CD4-positive, alpha-beta memory T cell (primary cell): ENCODE measurements at regions of chr12 and their contacts with region 1.

Region 1: DNA sequence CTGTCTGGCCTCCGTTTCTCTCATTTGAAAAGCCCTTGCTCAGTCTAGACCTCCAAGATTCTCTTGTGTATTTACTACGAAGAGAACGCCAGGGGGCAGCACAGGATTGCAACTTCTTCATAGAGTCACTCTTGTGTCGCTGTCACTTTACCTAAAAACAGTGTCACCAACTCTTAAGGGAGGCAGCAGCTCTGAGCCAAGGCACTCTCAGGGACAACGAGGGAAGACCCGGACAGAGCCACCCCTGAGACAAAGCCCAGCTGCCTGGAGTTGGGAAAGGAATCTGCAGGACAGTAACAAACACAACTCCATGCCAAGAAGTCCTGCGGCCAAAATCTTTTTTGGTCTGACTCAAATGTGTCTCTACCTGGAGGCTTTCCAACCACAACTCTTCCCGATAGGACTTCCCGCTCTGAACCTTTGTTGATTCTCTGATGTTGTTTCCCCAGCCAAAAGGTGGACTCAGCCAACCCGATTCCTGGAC is 9.6 kb upstream of the RPAP3 start:
- DNase-seq: peak; percentile 74 to 81 (median 78)
- H3K4me3 ChIP-seq: no peak overlapping the region
- H3K4me3 Mint-ChIP-seq: no peak overlapping the region
- H3K27ac ChIP-seq: no peak overlapping the region
- H3K27ac Mint-ChIP-seq: peak overlapping the region in 5 of 7 donors; percentile 24 to 77 (median 65)
- H3K4me1 ChIP-seq: peaks cover 18% of the 10 kb centered on the region
- H3K4me1 Mint-ChIP-seq: peaks cover 11 to 24% (median 20%) of the 10 kb centered on the region in 4 donors
- H3K27me3 ChIP-seq: no peaks in the 10 kb centered on the region
- H3K27me3 Mint-ChIP-seq: no peaks in the 10 kb centered on the region

Region 2: GRCh38 chr12:47361389-47362021 is 353.9 kb before region 1 on chr12:
- CTCF ChIA-PET with region 1: no interaction called
- POLR2A ChIA-PET with region 1: no interaction called
- intact Hi-C with region 1: no loop called
- DNase-seq: peak; percentile 23 to 64 (median 29)
- H3K4me3 ChIP-seq: peak overlapping the region; percentile 37 to 41
- H3K4me3 Mint-ChIP-seq: peak overlapping the region; percentile 73 to 93 (median 86)
- H3K27ac ChIP-seq: peak overlapping the region; percentile 90
- H3K27ac Mint-ChIP-seq: peak overlapping the region; percentile 94 to 99 (median 96)
- H3K4me1 ChIP-seq: peaks cover 81% of the 10 kb centered on the region
- H3K4me1 Mint-ChIP-seq: peaks cover 48 to 63% (median 55%) of the 10 kb centered on the region in 4 donors
- H3K27me3 ChIP-seq: no peaks in the 10 kb centered on the region
- H3K27me3 Mint-ChIP-seq: no peaks in the 10 kb centered on the region

Region 3: GRCh38 chr12:47504775-47505446 is 210.5 kb before region 1 on chr12:
- CTCF ChIA-PET with region 1: no interaction called
- POLR2A ChIA-PET with region 1: no interaction called
- intact Hi-C with region 1: no loop called
- DNase-seq: no peak
- H3K4me3 ChIP-seq: no peak overlapping the region
- H3K4me3 Mint-ChIP-seq: no peak overlapping the region
- H3K27ac ChIP-seq: no peak overlapping the region
- H3K27ac Mint-ChIP-seq: no peak overlapping the region
- H3K4me1 ChIP-seq: no peaks in the 10 kb centered on the region
- H3K4me1 Mint-ChIP-seq: no peaks in the 10 kb centered on the region
- H3K27me3 ChIP-seq: no peaks in the 10 kb centered on the region
- H3K27me3 Mint-ChIP-seq: peaks cover 0 to 4% of the 10 kb centered on the region in 2 donors

Region 4: DNA sequence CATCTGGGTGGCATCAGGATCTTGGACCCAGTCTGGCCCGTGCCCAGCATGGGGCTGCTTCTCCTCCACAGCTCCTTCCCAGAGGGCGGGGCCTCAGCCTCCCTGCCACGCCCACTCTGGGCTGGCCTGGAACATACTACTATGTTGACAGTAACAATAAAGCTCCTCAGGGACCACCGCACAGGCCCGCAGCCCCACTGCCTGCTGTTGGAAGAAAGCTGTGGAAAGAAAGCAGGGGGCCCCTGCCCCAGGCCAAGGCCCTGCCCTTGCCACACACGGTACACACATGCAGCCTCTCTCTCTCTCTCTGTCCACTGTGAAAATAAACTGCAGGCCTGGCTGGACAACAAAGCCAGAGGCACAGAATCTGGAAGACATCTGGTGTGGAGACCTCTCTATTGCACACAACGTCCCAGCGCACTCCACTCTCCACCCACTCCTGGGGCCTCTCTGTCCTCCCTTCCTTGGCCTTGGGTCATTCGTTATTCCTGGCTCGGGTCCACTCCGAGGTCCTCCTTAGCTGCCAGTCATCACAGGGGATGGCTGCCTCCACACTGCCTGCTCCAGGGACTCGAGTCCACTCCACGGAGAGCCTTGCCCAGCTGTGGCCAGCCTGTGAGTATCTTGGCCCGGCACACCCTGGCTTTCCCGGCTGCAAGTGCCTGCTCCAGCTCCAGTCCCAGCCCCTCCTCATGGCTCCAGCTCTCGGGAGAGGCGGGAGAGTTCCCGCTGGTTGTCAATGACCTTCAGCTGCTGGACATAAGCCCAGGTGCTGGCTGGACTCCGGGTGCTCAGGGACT is 21.6 kb after region 1 on chr12:
- CTCF ChIA-PET with region 1: interaction called, 125 read pairs
- POLR2A ChIA-PET with region 1: interaction called, 4 read pairs
- intact Hi-C with region 1: loop called (anchors 1 kb)
- DNase-seq: no peak
- H3K4me3 ChIP-seq: no peak overlapping the region
- H3K4me3 Mint-ChIP-seq: no peak overlapping the region
- H3K27ac ChIP-seq: no peak overlapping the region
- H3K27ac Mint-ChIP-seq: no peak overlapping the region
- H3K4me1 ChIP-seq: peaks cover 22% of the 10 kb centered on the region
- H3K4me1 Mint-ChIP-seq: peaks cover 9 to 36% (median 24%) of the 10 kb centered on the region in 4 donors
- H3K27me3 ChIP-seq: no peaks in the 10 kb centered on the region
- H3K27me3 Mint-ChIP-seq: no peaks in the 10 kb centered on the region

Region 5: GRCh38 chr12:47767216-47767724 is 51.8 kb after region 1 on chr12:
- CTCF ChIA-PET with region 1: interaction called, 318 read pairs
- POLR2A ChIA-PET with region 1: interaction called, 3 read pairs
- intact Hi-C with region 1: loop called (anchors 1 kb)
- DNase-seq: peak; percentile 61 to 72 (median 67)
- H3K4me3 ChIP-seq: no peak overlapping the region
- H3K4me3 Mint-ChIP-seq: no peak overlapping the region
- H3K27ac ChIP-seq: no peak overlapping the region
- H3K27ac Mint-ChIP-seq: peak overlapping the region in 1 of 7 donors; percentile 7
- H3K4me1 ChIP-seq: peaks cover under 1% of the 10 kb centered on the region
- H3K4me1 Mint-ChIP-seq: peaks cover 4 to 14% (median 6%) of the 10 kb centered on the region in 4 donors
- H3K27me3 ChIP-seq: no peaks in the 10 kb centered on the region
- H3K27me3 Mint-ChIP-seq: no peaks in the 10 kb centered on the region

Region 6: DNA sequence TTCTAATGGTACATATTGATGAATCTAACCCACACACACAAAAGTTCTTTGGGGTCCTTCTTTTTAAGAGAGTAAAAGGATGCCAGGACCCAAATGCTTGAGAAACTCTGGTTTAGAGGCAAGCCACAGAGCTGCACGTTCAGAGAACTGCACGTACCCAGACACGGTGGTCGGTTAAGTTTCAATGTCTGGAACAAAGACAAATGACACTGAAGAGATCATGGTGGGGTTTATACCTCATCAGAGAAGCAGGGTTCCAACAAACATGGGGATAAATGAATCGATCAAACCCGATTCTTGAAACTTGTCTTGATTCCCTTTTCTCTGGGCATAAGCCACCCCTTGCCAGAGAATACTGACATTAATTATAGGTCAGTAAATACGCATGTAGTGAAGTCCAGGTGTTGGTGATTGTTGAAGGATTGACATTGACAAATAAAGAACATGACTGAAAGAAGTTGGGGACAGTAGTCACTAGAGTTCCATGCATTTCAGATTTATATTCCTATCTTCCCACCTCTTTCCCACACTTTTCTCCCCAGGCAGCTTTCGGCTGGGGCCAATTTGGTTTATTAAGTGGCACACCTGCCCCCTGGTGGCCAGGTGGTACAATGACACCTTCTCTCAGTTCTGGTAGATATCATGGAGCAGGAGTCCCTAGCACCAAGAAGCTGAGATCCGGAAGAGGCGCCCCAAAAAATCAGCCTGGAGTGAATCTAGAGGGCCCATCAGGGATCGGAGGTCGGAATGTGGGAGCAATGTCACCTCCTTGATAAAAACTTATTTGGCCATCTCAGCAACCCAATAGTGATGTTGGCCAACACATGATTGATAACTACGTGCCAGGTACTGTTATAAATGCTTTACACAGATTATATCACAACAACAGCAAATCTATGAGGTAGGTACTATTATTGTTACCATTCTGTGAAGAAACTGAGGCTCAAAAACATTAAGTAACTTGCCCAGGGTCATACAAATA is 122.0 kb after region 1 on chr12:
- CTCF ChIA-PET with region 1: interaction called, 185 read pairs
- POLR2A ChIA-PET with region 1: interaction called, 5 read pairs
- intact Hi-C with region 1: loop called (anchors 1 kb)
- DNase-seq: peak; percentile 50 to 73 (median 64)
- H3K4me3 ChIP-seq: no peak overlapping the region
- H3K4me3 Mint-ChIP-seq: no peak overlapping the region
- H3K27ac ChIP-seq: no peak overlapping the region
- H3K27ac Mint-ChIP-seq: peak overlapping the region in 6 of 7 donors; percentile 10 to 93 (median 40)
- H3K4me1 ChIP-seq: peaks cover 47% of the 10 kb centered on the region
- H3K4me1 Mint-ChIP-seq: peaks cover 31 to 53% (median 42%) of the 10 kb centered on the region in 4 donors
- H3K27me3 ChIP-seq: no peaks in the 10 kb centered on the region
- H3K27me3 Mint-ChIP-seq: no peaks in the 10 kb centered on the region

Region 7: GRCh38 chr12:48165094-48165981 is 449.9 kb after region 1 on chr12:
- CTCF ChIA-PET with region 1: interaction called, 4 read pairs
- POLR2A ChIA-PET with region 1: no interaction called
- intact Hi-C with region 1: loop called (anchors 1 kb)
- DNase-seq: peak; percentile 61 to 73 (median 71)
- H3K4me3 ChIP-seq: no peak overlapping the region
- H3K4me3 Mint-ChIP-seq: no peak overlapping the region
- H3K27ac ChIP-seq: no peak overlapping the region
- H3K27ac Mint-ChIP-seq: no peak overlapping the region
- H3K4me1 ChIP-seq: no peaks in the 10 kb centered on the region
- H3K4me1 Mint-ChIP-seq: peaks cover 0 to 6% (median 1%) of the 10 kb centered on the region in 4 donors
- H3K27me3 ChIP-seq: no peaks in the 10 kb centered on the region
- H3K27me3 Mint-ChIP-seq: peaks cover 6 to 7% of the 10 kb centered on the region in 2 donors

Region 8: GRCh38 chr12:48618541-48618940 is 903.1 kb after region 1 on chr12:
- CTCF ChIA-PET with region 1: no interaction called
- POLR2A ChIA-PET with region 1: no interaction called
- intact Hi-C with region 1: loop called (anchors 10 kb)
- DNase-seq: peak; percentile 62 to 75 (median 72)
- H3K4me3 ChIP-seq: no peak overlapping the region
- H3K4me3 Mint-ChIP-seq: no peak overlapping the region
- H3K27ac ChIP-seq: no peak overlapping the region
- H3K27ac Mint-ChIP-seq: no peak overlapping the region
- H3K4me1 ChIP-seq: no peaks in the 10 kb centered on the region
- H3K4me1 Mint-ChIP-seq: peaks cover 0 to 6% (median 2%) of the 10 kb centered on the region in 4 donors
- H3K27me3 ChIP-seq: no peaks in the 10 kb centered on the region
- H3K27me3 Mint-ChIP-seq: peaks cover 24 to 39% of the 10 kb centered on the region in 2 donors